B cell (primary cell): ENCODE measurements at regions of chr19 and their contacts with region 1.

Region 1: DNA sequence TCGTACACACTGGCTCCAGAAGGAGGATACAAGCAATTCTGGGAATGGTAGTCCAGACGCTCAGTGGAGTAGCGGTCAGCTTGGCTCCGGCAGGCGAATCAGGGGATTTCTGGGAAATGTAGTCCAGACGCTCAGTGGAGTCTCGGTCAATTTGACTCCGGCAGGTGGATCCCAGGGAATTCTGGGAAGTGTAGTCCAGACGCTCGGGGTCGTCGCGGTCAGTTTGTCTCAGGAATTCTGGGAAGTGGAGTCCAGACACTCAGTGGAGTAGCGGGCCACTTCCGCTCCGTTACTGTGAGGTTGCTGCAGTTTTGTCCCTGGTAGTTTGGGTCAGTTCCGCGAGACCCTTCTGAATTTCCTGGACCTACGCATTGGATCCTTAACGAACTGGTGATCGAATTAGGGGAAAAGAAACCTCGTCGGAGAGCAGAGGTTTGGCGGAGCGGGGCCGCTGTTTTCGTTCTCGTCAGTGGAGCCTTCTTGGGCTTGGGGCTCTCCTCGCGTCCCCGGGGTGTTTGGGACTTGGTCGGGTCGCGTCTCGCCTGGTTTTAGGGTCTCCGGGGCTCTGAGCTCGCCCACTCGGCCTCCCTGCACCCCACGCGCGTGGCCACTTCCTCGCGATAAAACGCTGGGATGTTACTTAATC is at the start of gene ZNF225:
- DNase-seq: peak; percentile 91
- ATAC-seq: peak; percentile 95
- H3K4me3 ChIP-seq: peak within 1 kb of the TSS; percentile 71 to 98 (median 86)
- H3K4me3 Mint-ChIP-seq: peak within 1 kb of the TSS; percentile 99
- H3K27ac ChIP-seq: peak within 1 kb of the TSS; percentile 45 to 65
- H3K27ac Mint-ChIP-seq: peak within 1 kb of the TSS; percentile 90
- H3K4me1 ChIP-seq: peaks cover 9 to 19% of the 10 kb centered on the region in 2 donors
- H3K4me1 Mint-ChIP-seq: peaks cover 28% of the 10 kb centered on the region
- H3K27me3 ChIP-seq: no peaks in the 10 kb centered on the region
- H3K27me3 Mint-ChIP-seq: no peaks in the 10 kb centered on the region
- CTCF ChIP-seq: no peak
- total RNA-seq, gene ZNF225: 12.1 and 13.1 TPM in 2 replicates

Region 2: GRCh38 chr19:43826787-43827754 is 286.2 kb before region 1 on chr19 and contains the start of gene ZNF283:
- CTCF ChIA-PET with region 1: no interaction called
- POLR2A ChIA-PET with region 1: no interaction called
- intact Hi-C with region 1: loop called (anchors 5 kb)
- DNase-seq: peak; percentile 86
- ATAC-seq: peak; percentile 99
- H3K4me3 ChIP-seq: peak within 1 kb of the TSS; percentile 56 to 88 (median 69)
- H3K4me3 Mint-ChIP-seq: peak within 1 kb of the TSS; percentile 92
- H3K27ac ChIP-seq: peak within 1 kb of the TSS in 1 of 2 donors; percentile 23
- H3K27ac Mint-ChIP-seq: peak within 1 kb of the TSS; percentile 50
- H3K4me1 ChIP-seq: peaks cover 9 to 12% of the 10 kb centered on the region in 2 donors
- H3K4me1 Mint-ChIP-seq: peaks cover 17% of the 10 kb centered on the region
- H3K27me3 ChIP-seq: peaks cover 0 to under 1% (median 0%) of the 10 kb centered on the region in 4 experiments
- H3K27me3 Mint-ChIP-seq: peaks cover 11% of the 10 kb centered on the region
- CTCF ChIP-seq: no peak
- total RNA-seq, gene ZNF283: 20.8 and 23.3 TPM in 2 replicates

Region 3: DNA sequence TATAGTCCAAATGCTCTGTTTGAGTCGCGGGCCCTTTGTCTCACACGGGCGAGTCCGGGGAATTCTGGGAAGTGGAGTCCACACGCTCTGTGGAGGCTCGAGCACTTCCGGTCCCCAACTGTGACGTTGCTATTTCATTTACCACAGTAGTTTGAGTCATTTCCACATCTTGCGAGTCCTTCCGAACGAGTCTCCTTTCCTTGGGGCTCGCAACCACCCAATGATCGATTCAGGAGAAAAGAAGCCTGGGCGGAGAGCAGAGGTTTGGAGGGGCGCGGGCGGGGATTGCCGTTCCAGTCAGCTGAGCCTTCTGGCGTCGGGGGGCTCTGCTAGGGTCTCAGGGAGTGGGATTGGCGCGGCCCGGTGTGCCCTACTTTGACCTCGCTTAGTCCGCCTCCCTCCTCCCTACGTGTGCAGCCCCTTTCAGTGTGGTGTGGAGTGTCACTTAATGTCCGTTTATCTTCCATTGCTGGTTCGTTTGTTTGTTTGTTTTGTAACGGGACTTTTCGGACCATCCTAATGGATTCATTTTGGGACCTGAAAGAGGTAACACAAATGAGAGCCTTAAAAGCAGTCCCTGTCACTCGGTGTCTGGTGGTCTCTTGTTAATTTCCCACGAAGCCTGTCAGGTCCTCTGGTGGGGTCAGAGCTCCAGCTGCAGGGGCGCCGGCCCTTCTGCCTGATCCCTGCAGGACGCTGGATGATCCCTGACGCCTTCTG is 87.9 kb before region 1 on chr19 and contains the start of gene ZNF222:
- CTCF ChIA-PET with region 1: no interaction called
- POLR2A ChIA-PET with region 1: no interaction called
- intact Hi-C with region 1: loop called (anchors 1 kb)
- DNase-seq: peak; percentile 83
- ATAC-seq: peak; percentile 97
- H3K4me3 ChIP-seq: peak within 1 kb of the TSS; percentile 72 to 98 (median 84)
- H3K4me3 Mint-ChIP-seq: peak within 1 kb of the TSS; percentile 96
- H3K27ac ChIP-seq: peak within 1 kb of the TSS; percentile 38 to 66
- H3K27ac Mint-ChIP-seq: peak within 1 kb of the TSS; percentile 88
- H3K4me1 ChIP-seq: peaks cover 11 to 13% of the 10 kb centered on the region in 2 donors
- H3K4me1 Mint-ChIP-seq: peaks cover 19% of the 10 kb centered on the region
- H3K27me3 ChIP-seq: no peaks in the 10 kb centered on the region
- H3K27me3 Mint-ChIP-seq: peaks cover 8% of the 10 kb centered on the region
- CTCF ChIP-seq: no peak
- total RNA-seq, gene ZNF222: 7.5 and 9.1 TPM in 2 replicates

Region 4: GRCh38 chr19:44141191-44142058 is 28.2 kb after region 1 on chr19 and contains the start of gene ZNF234:
- CTCF ChIA-PET with region 1: no interaction called
- POLR2A ChIA-PET with region 1: no interaction called
- intact Hi-C with region 1: loop called (anchors 1 kb)
- DNase-seq: peak; percentile 81
- ATAC-seq: peak; percentile 95
- H3K4me3 ChIP-seq: peak within 1 kb of the TSS; percentile 64 to 93 (median 81)
- H3K4me3 Mint-ChIP-seq: peak within 1 kb of the TSS; percentile 93
- H3K27ac ChIP-seq: peak within 1 kb of the TSS; percentile 61 to 77
- H3K27ac Mint-ChIP-seq: peak within 1 kb of the TSS; percentile 87
- H3K4me1 ChIP-seq: peaks cover 13 to 15% of the 10 kb centered on the region in 2 donors
- H3K4me1 Mint-ChIP-seq: peaks cover 27% of the 10 kb centered on the region
- H3K27me3 ChIP-seq: no peaks in the 10 kb centered on the region
- H3K27me3 Mint-ChIP-seq: no peaks in the 10 kb centered on the region
- CTCF ChIP-seq: no peak
- total RNA-seq, gene ZNF234: 24.1 and 27.5 TPM in 2 replicates

Region 5: GRCh38 chr19:44156475-44156874 is 43.2 kb after region 1 on chr19:
- CTCF ChIA-PET with region 1: no interaction called
- POLR2A ChIA-PET with region 1: no interaction called
- intact Hi-C with region 1: no loop called
- DNase-seq: no peak
- ATAC-seq: no peak
- H3K4me3 ChIP-seq: no peak overlapping the region
- H3K4me3 Mint-ChIP-seq: no peak overlapping the region
- H3K27ac ChIP-seq: no peak overlapping the region
- H3K27ac Mint-ChIP-seq: no peak overlapping the region
- H3K4me1 ChIP-seq: no peaks in the 10 kb centered on the region
- H3K4me1 Mint-ChIP-seq: no peaks in the 10 kb centered on the region
- H3K27me3 ChIP-seq: no peaks in the 10 kb centered on the region
- H3K27me3 Mint-ChIP-seq: no peaks in the 10 kb centered on the region
- CTCF ChIP-seq: no peak

Region 6: DNA sequence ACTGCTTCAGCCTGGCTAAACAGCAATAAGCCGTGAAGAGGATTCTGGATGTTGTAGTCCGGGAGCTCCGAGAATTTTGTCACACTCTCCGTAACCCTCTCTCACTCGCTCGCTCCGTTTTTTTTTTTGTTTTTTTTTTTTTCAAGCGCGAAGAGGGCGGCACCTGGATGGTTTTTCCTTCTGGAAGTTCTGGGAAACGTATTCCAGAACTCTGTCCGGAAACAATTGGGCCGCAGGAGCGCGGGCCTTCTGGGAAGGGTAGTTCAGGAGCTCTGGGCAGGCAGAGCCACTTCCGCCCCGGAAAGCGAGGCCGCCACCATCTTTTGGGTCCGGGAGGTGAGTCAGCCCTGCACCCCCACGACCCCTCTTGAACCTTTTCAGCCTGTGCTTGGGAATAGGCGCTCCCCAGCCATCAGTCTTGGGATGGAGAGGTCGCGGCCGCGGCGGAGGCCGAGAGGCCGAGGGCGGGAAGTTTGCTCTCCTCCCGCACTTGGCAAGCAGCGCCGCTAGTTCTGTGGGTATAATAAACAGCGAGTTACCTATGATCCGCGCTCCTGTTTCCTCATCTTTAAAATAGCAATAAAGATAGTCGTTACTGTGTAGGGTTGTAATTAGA is 99.1 kb after region 1 on chr19 and contains the start of gene ZNF227:
- CTCF ChIA-PET with region 1: no interaction called
- POLR2A ChIA-PET with region 1: no interaction called
- intact Hi-C with region 1: loop called (anchors 1 kb)
- DNase-seq: peak; percentile 85
- ATAC-seq: peak; percentile 94
- H3K4me3 ChIP-seq: peak within 1 kb of the TSS; percentile 85 to 93 (median 88)
- H3K4me3 Mint-ChIP-seq: peak within 1 kb of the TSS; percentile 96
- H3K27ac ChIP-seq: peak within 1 kb of the TSS; percentile 48 to 77
- H3K27ac Mint-ChIP-seq: peak within 1 kb of the TSS; percentile 93
- H3K4me1 ChIP-seq: peaks cover 14 to 15% of the 10 kb centered on the region in 2 donors
- H3K4me1 Mint-ChIP-seq: peaks cover 21% of the 10 kb centered on the region
- H3K27me3 ChIP-seq: no peaks in the 10 kb centered on the region
- H3K27me3 Mint-ChIP-seq: no peaks in the 10 kb centered on the region
- CTCF ChIP-seq: no peak
- total RNA-seq, gene ZNF227: 49.5 and 53.0 TPM in 2 replicates

Region 7: DNA sequence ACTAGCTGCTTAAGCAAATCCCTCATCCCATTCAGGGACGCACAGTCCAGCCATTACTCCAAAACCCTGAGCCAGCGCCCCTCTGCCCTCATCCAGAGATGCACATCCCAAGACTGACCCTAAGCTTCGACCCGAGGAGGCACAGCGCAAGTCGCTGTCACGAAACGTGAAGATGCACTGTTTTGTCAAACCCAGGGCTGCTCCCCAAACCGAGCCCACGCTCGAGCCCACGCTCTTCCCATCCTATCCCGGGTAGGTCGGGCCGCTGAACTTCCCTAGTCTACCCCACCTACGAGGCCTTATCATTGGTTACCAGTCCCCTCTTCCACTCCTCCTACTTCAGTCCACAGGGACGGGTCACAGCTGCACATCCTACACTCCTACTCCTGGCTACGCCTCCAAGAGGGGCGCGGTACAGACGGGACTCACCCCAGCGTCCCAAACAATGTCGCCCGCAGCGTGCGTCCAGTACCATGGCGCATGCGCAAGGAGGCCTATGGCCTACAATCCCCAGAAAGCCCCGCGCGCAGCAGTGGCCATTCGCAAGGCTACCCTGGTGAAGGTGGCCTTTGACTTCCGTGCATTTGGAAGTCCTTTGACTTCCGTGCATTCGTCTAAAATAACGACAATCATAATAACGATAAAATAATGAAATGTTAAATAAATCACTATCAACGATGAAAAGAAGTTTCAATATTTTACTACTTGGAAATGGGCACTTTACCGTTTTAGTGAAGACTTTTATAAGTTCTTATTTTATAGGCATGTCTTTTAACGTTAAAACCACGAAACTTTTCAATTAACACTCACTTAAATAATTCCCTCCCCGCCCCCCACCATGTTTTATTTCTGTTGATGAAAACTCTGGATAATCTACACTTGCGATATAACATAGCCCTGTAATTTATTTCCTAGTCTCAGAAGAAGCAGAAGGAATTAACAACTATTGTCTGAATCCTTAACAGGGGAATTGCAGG is 288.2 kb after region 1 on chr19 and contains the start of gene ZNF285:
- CTCF ChIA-PET with region 1: no interaction called
- POLR2A ChIA-PET with region 1: no interaction called
- intact Hi-C with region 1: loop called (anchors 1 kb)
- DNase-seq: peak; percentile 89
- ATAC-seq: peak; percentile 99
- H3K4me3 ChIP-seq: peak within 1 kb of the TSS; percentile 59 to 77 (median 73)
- H3K4me3 Mint-ChIP-seq: peak within 1 kb of the TSS; percentile 96
- H3K27ac ChIP-seq: no peak within 1 kb of the TSS
- H3K27ac Mint-ChIP-seq: peak within 1 kb of the TSS; percentile 72
- H3K4me1 ChIP-seq: peaks cover 0 to 13% of the 10 kb centered on the region in 2 donors
- H3K4me1 Mint-ChIP-seq: peaks cover 10% of the 10 kb centered on the region
- H3K27me3 ChIP-seq: peaks cover 0 to 4% (median 1%) of the 10 kb centered on the region in 4 experiments
- H3K27me3 Mint-ChIP-seq: peaks cover 5% of the 10 kb centered on the region
- CTCF ChIP-seq: no peak
- total RNA-seq, gene ZNF285: 7.6 and 7.9 TPM in 2 replicates

Region 8: GRCh38 chr19:44447916-44448674 is 334.8 kb after region 1 on chr19 and contains the start of gene ZNF229:
- CTCF ChIA-PET with region 1: no interaction called
- POLR2A ChIA-PET with region 1: no interaction called
- intact Hi-C with region 1: loop called (anchors 1 kb)
- DNase-seq: peak; percentile 88
- ATAC-seq: peak; percentile 99
- H3K4me3 ChIP-seq: peak within 1 kb of the TSS; percentile 24 to 69 (median 68)
- H3K4me3 Mint-ChIP-seq: peak within 1 kb of the TSS; percentile 94
- H3K27ac ChIP-seq: no peak within 1 kb of the TSS
- H3K27ac Mint-ChIP-seq: peak within 1 kb of the TSS; percentile 71
- H3K4me1 ChIP-seq: peaks cover 8 to 9% of the 10 kb centered on the region in 2 donors
- H3K4me1 Mint-ChIP-seq: peaks cover 15% of the 10 kb centered on the region
- H3K27me3 ChIP-seq: peaks cover 0 to 13% (median 1%) of the 10 kb centered on the region in 4 experiments
- H3K27me3 Mint-ChIP-seq: peaks cover 19% of the 10 kb centered on the region
- CTCF ChIP-seq: no peak
- total RNA-seq, gene ZNF229: 6.2 and 6.7 TPM in 2 replicates